ENCODE measurements at regions of chrX and their contacts with region 1.

Region 1: GRCh38 chrX:74550295-74550802 is 64.1 kb downstream of the RLIM start:
- DNase-seq: peak; percentile 76
- H3K4me3 Mint-ChIP-seq: no peak overlapping the region
- H3K27ac Mint-ChIP-seq: no peak overlapping the region
- H3K4me1 Mint-ChIP-seq: no peaks in the 10 kb centered on the region
- H3K27me3 Mint-ChIP-seq: peaks cover 2% of the 10 kb centered on the region
- CTCF ChIP-seq: peak; percentile 98

Region 2: GRCh38 chrX:74119016-74119910 is 431.1 kb before region 1 on chrX:
- CTCF ChIA-PET with region 1: no interaction called
- POLR2A ChIA-PET with region 1: no interaction called
- intact Hi-C with region 1: no loop called
- DNase-seq: peak; percentile 64
- H3K4me3 Mint-ChIP-seq: no peak overlapping the region
- H3K27ac Mint-ChIP-seq: no peak overlapping the region
- H3K4me1 Mint-ChIP-seq: peaks cover 15% of the 10 kb centered on the region
- H3K27me3 Mint-ChIP-seq: no peaks in the 10 kb centered on the region
- CTCF ChIP-seq: no peak

Region 3: DNA sequence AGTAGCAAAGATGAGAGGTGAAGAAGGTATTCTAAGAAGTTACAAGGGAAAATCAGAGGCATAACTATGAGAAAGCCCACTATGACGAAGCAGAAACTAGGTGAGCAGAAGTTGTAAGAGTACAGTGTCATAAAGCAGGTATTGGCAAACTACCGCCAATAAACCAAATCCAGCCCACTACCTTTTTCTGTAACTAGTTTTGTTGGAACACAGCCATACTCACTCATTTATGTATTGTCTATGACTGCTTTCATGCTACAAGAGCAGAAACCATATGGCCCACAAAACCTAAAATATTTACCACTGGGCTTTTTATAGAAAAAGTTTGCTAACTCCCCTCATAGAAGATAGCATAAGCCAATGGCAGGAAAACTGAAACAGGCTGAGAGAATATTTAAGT is 278.1 kb before region 1 on chrX:
- CTCF ChIA-PET with region 1: no interaction called
- POLR2A ChIA-PET with region 1: no interaction called
- intact Hi-C with region 1: no loop called
- DNase-seq: no peak
- H3K4me3 Mint-ChIP-seq: no peak overlapping the region
- H3K27ac Mint-ChIP-seq: no peak overlapping the region
- H3K4me1 Mint-ChIP-seq: no peaks in the 10 kb centered on the region
- H3K27me3 Mint-ChIP-seq: peaks cover 73% of the 10 kb centered on the region
- CTCF ChIP-seq: no peak

Region 4: GRCh38 chrX:74291964-74292807 is 258.2 kb before region 1 on chrX:
- CTCF ChIA-PET with region 1: no interaction called
- POLR2A ChIA-PET with region 1: no interaction called
- intact Hi-C with region 1: loop called (anchors 2 kb)
- DNase-seq: peak; percentile 87
- H3K4me3 Mint-ChIP-seq: peak overlapping the region; percentile 79
- H3K27ac Mint-ChIP-seq: peak overlapping the region; percentile 63
- H3K4me1 Mint-ChIP-seq: no peaks in the 10 kb centered on the region
- H3K27me3 Mint-ChIP-seq: no peaks in the 10 kb centered on the region
- CTCF ChIP-seq: no peak

Region 5: GRCh38 chrX:74458735-74459134 is 91.6 kb before region 1 on chrX:
- CTCF ChIA-PET with region 1: interaction called, 3 read pairs
- POLR2A ChIA-PET with region 1: no interaction called
- intact Hi-C with region 1: loop called (anchors 2 kb)
- DNase-seq: peak; percentile 74
- H3K4me3 Mint-ChIP-seq: no peak overlapping the region
- H3K27ac Mint-ChIP-seq: no peak overlapping the region
- H3K4me1 Mint-ChIP-seq: peaks cover 6% of the 10 kb centered on the region
- H3K27me3 Mint-ChIP-seq: peaks cover 39% of the 10 kb centered on the region
- CTCF ChIP-seq: peak; percentile 19

Region 6: DNA sequence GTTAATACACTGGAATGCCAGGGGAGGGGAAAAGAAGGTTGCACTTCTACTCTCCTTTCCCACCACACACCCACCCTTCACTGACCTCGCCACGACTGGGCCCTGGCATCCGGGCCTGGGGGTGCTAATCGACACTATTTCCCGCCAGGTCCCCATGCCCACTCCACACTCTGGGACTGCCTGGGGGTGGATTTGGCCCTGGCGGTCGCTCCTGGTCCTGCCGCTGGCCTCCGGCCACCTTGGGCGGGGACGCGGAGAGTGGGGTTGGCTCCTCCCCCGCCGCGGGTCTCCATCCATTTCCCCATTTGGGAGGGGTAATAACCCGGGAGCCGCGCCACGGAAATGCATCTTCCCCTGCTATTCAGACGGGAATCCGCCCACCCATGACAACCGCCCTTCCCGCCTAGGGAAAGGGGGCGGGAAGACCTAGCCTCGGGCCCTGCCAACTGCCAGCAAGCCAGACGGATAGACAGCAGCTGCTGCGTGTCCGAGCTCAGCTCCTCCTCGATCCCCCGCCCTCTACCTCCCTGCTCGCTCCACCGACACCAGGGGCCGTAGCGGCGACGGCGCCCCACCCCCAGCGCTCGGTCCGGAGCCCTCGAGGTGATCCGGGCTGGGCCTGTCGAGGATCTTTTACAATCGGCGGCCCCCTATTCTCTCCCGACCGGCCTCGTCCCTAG is 14.1 kb before region 1 on chrX:
- CTCF ChIA-PET with region 1: interaction called, 11 read pairs
- POLR2A ChIA-PET with region 1: interaction called, 3 read pairs
- intact Hi-C with region 1: loop called (anchors 1 kb)
- DNase-seq: peak; percentile 77
- H3K4me3 Mint-ChIP-seq: peak overlapping the region; percentile 69
- H3K27ac Mint-ChIP-seq: peak overlapping the region; percentile 35
- H3K4me1 Mint-ChIP-seq: peaks cover 13% of the 10 kb centered on the region
- H3K27me3 Mint-ChIP-seq: peaks cover 42% of the 10 kb centered on the region
- CTCF ChIP-seq: peak; percentile 29

Measured in MCF 10A (cell line).